ENCODE measurements at regions of chr18 and their contacts with region 1.

Region 1: DNA sequence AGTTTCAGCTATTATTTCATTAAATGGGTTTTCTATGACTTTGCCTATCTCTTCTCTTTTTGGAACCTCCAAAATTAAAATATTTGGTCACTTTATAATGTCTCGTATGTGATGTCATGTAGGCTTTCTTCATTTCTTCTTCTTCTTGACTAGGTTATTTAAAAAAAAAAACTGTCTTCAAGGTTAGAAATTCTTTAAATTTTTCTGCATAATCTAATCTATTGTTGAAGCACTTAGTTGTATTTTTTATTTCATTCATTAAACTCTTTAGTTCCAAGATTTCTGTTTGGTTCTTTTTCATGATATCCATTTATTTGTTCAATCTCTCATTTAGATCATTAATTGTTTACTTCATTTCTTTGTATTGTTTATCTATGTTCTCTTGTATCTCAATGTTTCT is 43.8 kb upstream of the ROCK1 start:
- DNase-seq: no peak
- ATAC-seq: no peak
- H3K4me3 ChIP-seq: no peak overlapping the region
- H3K4me3 Mint-ChIP-seq: no peak overlapping the region
- H3K27ac ChIP-seq: no peak overlapping the region
- H3K27ac Mint-ChIP-seq: no peak overlapping the region
- H3K4me1 ChIP-seq: no peaks in the 10 kb centered on the region
- H3K4me1 Mint-ChIP-seq: no peaks in the 10 kb centered on the region
- H3K27me3 ChIP-seq: no peaks in the 10 kb centered on the region
- H3K27me3 Mint-ChIP-seq: peaks cover 6% of the 10 kb centered on the region
- CTCF ChIP-seq: no peak

Region 2: GRCh38 chr18:21134898-21135297 is 20.5 kb before region 1 on chr18:
- CTCF ChIA-PET with region 1: no interaction called
- POLR2A ChIA-PET with region 1: no interaction called
- intact Hi-C with region 1: no loop called
- DNase-seq: peak in 6 of 9 experiments; percentile 19 to 64 (median 42)
- ATAC-seq: peak; percentile 65
- H3K4me3 ChIP-seq: no peak overlapping the region
- H3K4me3 Mint-ChIP-seq: no peak overlapping the region
- H3K27ac ChIP-seq: no peak overlapping the region
- H3K27ac Mint-ChIP-seq: no peak overlapping the region
- H3K4me1 ChIP-seq: no peaks in the 10 kb centered on the region
- H3K4me1 Mint-ChIP-seq: no peaks in the 10 kb centered on the region
- H3K27me3 ChIP-seq: no peaks in the 10 kb centered on the region
- H3K27me3 Mint-ChIP-seq: no peaks in the 10 kb centered on the region
- CTCF ChIP-seq: peak; percentile 75

Region 3: DNA sequence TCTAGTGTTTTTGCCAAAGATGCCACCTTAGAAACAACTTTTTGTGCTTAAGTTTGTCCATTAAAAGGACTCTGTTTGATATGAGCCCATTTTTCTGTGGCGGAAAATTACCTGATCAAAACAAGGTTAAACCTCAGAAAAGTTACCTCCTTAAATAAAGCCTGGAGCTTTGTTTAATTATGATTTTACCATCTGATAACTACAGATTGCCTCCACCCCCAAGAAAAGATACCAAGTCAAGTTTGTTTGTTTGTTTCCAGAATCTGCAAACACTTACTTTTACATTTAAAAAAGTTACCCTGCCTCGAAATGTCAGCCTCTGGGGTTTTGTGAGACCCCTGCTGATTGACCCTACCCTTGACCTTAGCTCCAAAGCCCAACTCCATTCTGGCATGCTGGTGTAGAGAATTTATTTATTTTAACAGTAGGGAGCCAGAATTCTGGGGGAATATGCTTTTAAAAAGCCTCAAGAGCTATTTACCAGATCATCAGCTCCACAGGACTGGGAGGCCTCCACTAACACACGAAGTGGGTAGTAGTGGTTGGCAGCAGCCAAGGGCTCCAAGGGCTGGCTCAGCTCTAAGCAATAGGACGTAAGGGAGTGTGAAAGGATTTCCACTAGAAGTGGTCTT is 63.3 kb after region 1 on chr18:
- CTCF ChIA-PET with region 1: no interaction called
- POLR2A ChIA-PET with region 1: no interaction called
- intact Hi-C with region 1: loop called (anchors 10 kb)
- DNase-seq: no peak
- ATAC-seq: no peak
- H3K4me3 ChIP-seq: no peak overlapping the region
- H3K4me3 Mint-ChIP-seq: no peak overlapping the region
- H3K27ac ChIP-seq: no peak overlapping the region
- H3K27ac Mint-ChIP-seq: no peak overlapping the region
- H3K4me1 ChIP-seq: no peaks in the 10 kb centered on the region
- H3K4me1 Mint-ChIP-seq: no peaks in the 10 kb centered on the region
- H3K27me3 ChIP-seq: no peaks in the 10 kb centered on the region
- H3K27me3 Mint-ChIP-seq: no peaks in the 10 kb centered on the region
- CTCF ChIP-seq: no peak